ENCODE measurements at regions of chr5 and their contacts with region 1.

Region 1: GRCh38 chr5:66617226-66617861 is 21.2 kb downstream of the MAST4 start:
- DNase-seq: no peak
- H3K4me3 Mint-ChIP-seq: no peak overlapping the region
- H3K27ac Mint-ChIP-seq: no peak overlapping the region
- H3K4me1 Mint-ChIP-seq: no peaks in the 10 kb centered on the region
- H3K27me3 Mint-ChIP-seq: peaks cover 11% of the 10 kb centered on the region
- CTCF ChIP-seq: no peak

Region 2: DNA sequence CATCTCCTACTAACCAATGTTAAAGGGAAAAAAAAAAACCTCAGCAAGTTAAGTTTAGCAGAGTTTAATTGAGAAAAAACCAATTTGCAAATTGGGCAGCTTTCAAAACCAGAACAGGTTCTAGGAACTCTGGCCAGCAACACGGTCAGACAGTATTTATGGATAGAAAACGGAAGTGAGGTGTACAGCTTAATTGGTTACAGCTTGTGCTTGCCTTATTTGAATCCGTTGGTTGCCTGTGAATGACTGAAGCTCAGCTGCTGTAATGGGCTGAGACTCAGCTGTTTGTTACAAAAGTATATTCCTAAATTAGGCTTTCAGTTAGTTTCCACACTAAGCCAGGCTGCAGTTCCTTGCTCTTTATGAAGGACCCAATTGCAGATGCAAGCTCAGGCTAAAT is 256.3 kb before region 1 on chr5:
- CTCF ChIA-PET with region 1: no interaction called
- POLR2A ChIA-PET with region 1: no interaction called
- intact Hi-C with region 1: loop called (anchors 5 kb)
- DNase-seq: no peak
- H3K4me3 Mint-ChIP-seq: no peak overlapping the region
- H3K27ac Mint-ChIP-seq: no peak overlapping the region
- H3K4me1 Mint-ChIP-seq: no peaks in the 10 kb centered on the region
- H3K27me3 Mint-ChIP-seq: peaks cover 27% of the 10 kb centered on the region
- CTCF ChIP-seq: no peak

Region 3: GRCh38 chr5:66469684-66470083 is 147.7 kb before region 1 on chr5:
- CTCF ChIA-PET with region 1: no interaction called
- POLR2A ChIA-PET with region 1: no interaction called
- intact Hi-C with region 1: no loop called
- DNase-seq: no peak
- H3K4me3 Mint-ChIP-seq: no peak overlapping the region
- H3K27ac Mint-ChIP-seq: no peak overlapping the region
- H3K4me1 Mint-ChIP-seq: no peaks in the 10 kb centered on the region
- H3K27me3 Mint-ChIP-seq: no peaks in the 10 kb centered on the region
- CTCF ChIP-seq: no peak

Region 4: GRCh38 chr5:66494421-66494820 is 122.9 kb before region 1 on chr5:
- CTCF ChIA-PET with region 1: no interaction called
- POLR2A ChIA-PET with region 1: no interaction called
- intact Hi-C with region 1: no loop called
- DNase-seq: peak; percentile 1
- H3K4me3 Mint-ChIP-seq: no peak overlapping the region
- H3K27ac Mint-ChIP-seq: no peak overlapping the region
- H3K4me1 Mint-ChIP-seq: peaks cover 7% of the 10 kb centered on the region
- H3K27me3 Mint-ChIP-seq: peaks cover 11% of the 10 kb centered on the region
- CTCF ChIP-seq: no peak

Region 5: GRCh38 chr5:66582499-66583165 is 34.7 kb before region 1 on chr5:
- CTCF ChIA-PET with region 1: no interaction called
- POLR2A ChIA-PET with region 1: no interaction called
- intact Hi-C with region 1: no loop called
- DNase-seq: peak; percentile 30
- H3K4me3 Mint-ChIP-seq: no peak overlapping the region
- H3K27ac Mint-ChIP-seq: no peak overlapping the region
- H3K4me1 Mint-ChIP-seq: peaks cover 8% of the 10 kb centered on the region
- H3K27me3 Mint-ChIP-seq: no peaks in the 10 kb centered on the region
- CTCF ChIP-seq: no peak

Region 6: GRCh38 chr5:68159224-68159951 is 1542.0 kb after region 1 on chr5:
- CTCF ChIA-PET with region 1: no interaction called
- POLR2A ChIA-PET with region 1: no interaction called
- intact Hi-C with region 1: loop called (anchors 10 kb)
- DNase-seq: no peak
- H3K4me3 Mint-ChIP-seq: no peak overlapping the region
- H3K27ac Mint-ChIP-seq: no peak overlapping the region
- H3K4me1 Mint-ChIP-seq: no peaks in the 10 kb centered on the region
- H3K27me3 Mint-ChIP-seq: no peaks in the 10 kb centered on the region
- CTCF ChIP-seq: no peak

Measured in MCF 10A (cell line).